ENCODE measurements at regions of chr17 and their contacts with region 1.

Region 1: DNA sequence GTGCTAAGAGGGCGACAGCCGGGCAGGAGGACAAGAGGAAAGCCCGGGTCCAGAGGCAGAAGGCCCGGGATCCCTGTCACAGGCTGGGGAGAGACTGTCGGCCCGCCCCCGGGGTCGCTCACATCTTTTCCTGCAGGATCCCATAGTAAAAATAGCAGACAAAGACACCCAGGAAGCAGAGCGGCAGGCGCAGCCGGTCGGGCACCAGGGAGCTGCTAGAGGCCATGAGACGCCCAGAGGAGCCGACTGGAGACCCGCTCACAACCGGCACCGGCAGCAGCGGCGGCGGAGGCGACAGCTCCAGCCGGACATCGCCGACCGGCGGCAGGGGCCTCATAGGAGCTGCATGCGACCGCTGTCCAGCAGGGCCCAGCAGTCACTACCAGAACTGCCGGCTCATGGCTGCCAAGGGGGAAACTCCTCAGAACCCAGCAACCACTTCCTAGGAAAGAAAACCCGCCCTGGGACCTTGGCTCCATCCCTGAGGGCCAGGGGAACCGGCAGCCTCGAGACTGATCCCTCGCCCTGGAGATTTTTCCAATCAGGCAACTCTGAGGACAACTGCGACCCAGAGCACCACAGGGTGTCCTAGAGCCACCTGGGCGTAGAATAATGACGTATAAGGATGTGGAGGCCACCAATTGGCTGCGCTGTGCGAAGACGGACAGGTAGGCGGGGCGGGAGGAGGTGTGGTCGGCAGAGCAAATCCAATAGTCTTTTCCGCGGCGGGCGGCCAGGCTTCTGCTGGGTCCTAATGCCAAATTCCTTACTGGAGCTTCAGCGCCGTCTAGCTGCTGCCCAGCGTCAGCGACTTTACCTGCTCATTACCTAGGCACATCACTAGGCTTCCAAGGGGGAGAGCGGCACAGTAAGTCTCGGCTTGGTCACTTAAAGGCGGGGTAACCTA is at the start of gene SLC35B1:
- DNase-seq: peak; percentile 96 to 99 (median 98)
- ATAC-seq: peak; percentile 96
- H3K4me3 ChIP-seq: peak within 1 kb of the TSS; percentile 85
- H3K27ac ChIP-seq: peak within 1 kb of the TSS; percentile 98
- H3K4me1 ChIP-seq: peaks cover 6 to 18% of the 10 kb centered on the region in 2 experiments; a peak in 4 of 5 replicates
- H3K27me3 ChIP-seq: no peaks in the 10 kb centered on the region
- CTCF ChIP-seq: peak; percentile 96 to 99 (median 96)
- EP300 ChIP-seq: no peak
- POLR2A ChIP-seq: peak; percentile 84
- RAD21 ChIP-seq: peak; percentile 77 to 81
- polyA plus RNA-seq, gene SLC35B1: 62.0 to 64.4 TPM

Region 2: GRCh38 chr17:49521471-49522356 is 186.1 kb before region 1 on chr17:
- CTCF ChIA-PET with region 1: no interaction called
- POLR2A ChIA-PET with region 1: no interaction called
- in situ Hi-C with region 1: no loop called
- intact Hi-C with region 1: no loop called
- DNase-seq: no peak
- ATAC-seq: no peak
- H3K4me3 ChIP-seq: no peak overlapping the region
- H3K27ac ChIP-seq: no peak overlapping the region
- H3K4me1 ChIP-seq: no peaks in the 10 kb centered on the region
- H3K27me3 ChIP-seq: peaks cover 28 to 64% of the 10 kb centered on the region in 2 experiments; a peak in 4 of 5 replicates
- CTCF ChIP-seq: no peak
- EP300 ChIP-seq: no peak
- POLR2A ChIP-seq: no peak
- RAD21 ChIP-seq: no peak

Region 3: DNA sequence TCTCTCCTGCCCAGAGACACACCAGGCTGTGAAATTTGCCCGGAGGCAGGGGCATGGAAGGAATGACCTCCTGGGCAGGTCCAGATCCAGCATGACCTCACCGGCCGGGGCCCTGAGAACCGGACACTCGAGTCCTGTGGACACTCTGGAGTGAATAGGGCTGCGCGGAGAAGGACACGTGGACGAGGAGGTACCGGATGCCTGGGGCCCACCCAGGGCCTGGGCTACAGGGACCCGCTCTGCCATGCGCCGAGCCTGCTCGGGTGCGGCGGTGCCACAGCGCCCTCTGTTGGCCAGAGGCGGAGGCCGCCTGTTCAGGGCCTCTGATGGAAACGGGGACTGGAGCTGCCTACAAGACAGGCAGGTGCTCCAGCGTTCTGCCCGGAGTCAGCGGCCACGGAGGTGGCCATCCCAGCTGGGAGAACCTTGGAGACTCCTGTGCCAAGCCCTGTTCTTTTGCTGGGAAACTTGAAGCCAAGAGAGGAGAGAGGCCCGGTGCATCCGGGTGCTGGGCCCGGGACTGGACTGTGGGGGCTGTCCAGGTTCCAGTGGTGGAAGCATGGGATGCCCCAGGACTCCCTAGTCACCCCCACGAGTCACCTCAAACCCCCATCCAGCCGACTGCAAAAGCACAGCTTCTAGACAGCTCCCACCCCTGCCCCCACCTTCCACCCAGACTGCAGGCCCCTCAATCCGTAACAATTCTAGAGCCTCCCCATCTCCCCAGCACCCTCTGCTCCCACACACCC is 151.5 kb before region 1 on chr17:
- CTCF ChIA-PET with region 1: interaction called, 11 read pairs
- POLR2A ChIA-PET with region 1: no interaction called
- in situ Hi-C with region 1: no loop called
- intact Hi-C with region 1: no loop called
- DNase-seq: peak; percentile 83 to 91 (median 90)
- ATAC-seq: peak; percentile 99
- H3K4me3 ChIP-seq: no peak overlapping the region
- H3K27ac ChIP-seq: no peak overlapping the region
- H3K4me1 ChIP-seq: peaks cover 0 to 14% of the 10 kb centered on the region in 2 experiments; a peak in 3 of 5 replicates
- H3K27me3 ChIP-seq: peaks cover 0 to 6% of the 10 kb centered on the region in 2 experiments; a peak in 2 of 5 replicates
- CTCF ChIP-seq: peak; percentile 96 to 97 (median 96)
- EP300 ChIP-seq: no peak
- POLR2A ChIP-seq: no peak
- RAD21 ChIP-seq: peak; percentile 83 to 97

Region 4: DNA sequence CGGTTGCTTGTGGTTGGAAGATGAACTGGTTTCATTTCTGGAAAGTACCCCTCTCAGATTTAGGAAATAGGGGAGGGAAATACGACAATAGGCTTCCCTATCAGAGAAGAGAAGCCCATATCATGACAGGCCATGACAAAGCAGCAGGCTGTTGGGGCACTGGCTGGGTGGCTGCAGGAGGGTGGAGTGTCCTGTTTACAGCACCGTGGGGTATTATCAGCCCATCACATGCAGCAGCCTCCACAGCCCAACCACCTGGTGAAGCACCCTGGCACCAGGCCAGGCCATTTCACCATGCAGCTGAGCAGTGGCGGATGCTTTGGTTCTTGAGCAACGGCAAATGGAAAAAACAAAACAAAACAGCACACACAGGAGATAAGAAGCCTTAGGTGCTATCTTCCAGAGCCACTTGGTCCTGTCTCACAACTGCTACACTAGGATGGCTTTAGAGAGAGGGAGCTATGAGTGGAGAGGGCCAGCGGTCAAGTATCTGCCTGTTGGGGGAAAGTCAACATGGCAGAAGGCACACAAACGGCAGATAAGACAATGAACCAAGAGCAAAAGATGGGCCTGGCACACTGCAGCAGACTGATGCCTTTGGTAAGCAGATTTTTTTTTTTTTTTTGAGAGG is 31.9 kb after region 1 on chr17:
- CTCF ChIA-PET with region 1: no interaction called
- POLR2A ChIA-PET with region 1: interaction called, 21 read pairs
- in situ Hi-C with region 1: no loop called
- intact Hi-C with region 1: loop called (anchors 2 kb)
- DNase-seq: peak; percentile 95 to 100 (median 96)
- ATAC-seq: peak; percentile 92
- H3K4me3 ChIP-seq: peak overlapping the region; percentile 16
- H3K27ac ChIP-seq: peak overlapping the region; percentile 92
- H3K4me1 ChIP-seq: peaks cover 28 to 57% of the 10 kb centered on the region in 2 experiments
- H3K27me3 ChIP-seq: no peaks in the 10 kb centered on the region
- CTCF ChIP-seq: no peak; a peak in 1 of 6 replicates
- EP300 ChIP-seq: peak; percentile 99
- POLR2A ChIP-seq: peak; percentile 56; the same call in 1 of the 2 replicates
- RAD21 ChIP-seq: peak; percentile 11 to 55; a peak in 3 of 4 replicates

Region 5: GRCh38 chr17:49779739-49780231 is 71.9 kb after region 1 on chr17:
- CTCF ChIA-PET with region 1: interaction called, 13 read pairs
- POLR2A ChIA-PET with region 1: no interaction called
- in situ Hi-C with region 1: no loop called
- intact Hi-C with region 1: loop called (anchors 1 kb)
- DNase-seq: peak; percentile 35 to 78 (median 44)
- ATAC-seq: peak; percentile 95
- H3K4me3 ChIP-seq: no peak overlapping the region
- H3K27ac ChIP-seq: peak overlapping the region; percentile 35; the same call in 2 of the 3 replicates
- H3K4me1 ChIP-seq: peaks cover 5 to 16% of the 10 kb centered on the region in 2 experiments; a peak in 4 of 5 replicates
- H3K27me3 ChIP-seq: no peaks in the 10 kb centered on the region
- CTCF ChIP-seq: peak; percentile 61 to 81 (median 79)
- EP300 ChIP-seq: no peak
- POLR2A ChIP-seq: no peak
- RAD21 ChIP-seq: peak; percentile 80 to 87

Region 6: GRCh38 chr17:49822829-49823228 is 115.0 kb after region 1 on chr17:
- CTCF ChIA-PET with region 1: no interaction called
- POLR2A ChIA-PET with region 1: no interaction called
- in situ Hi-C with region 1: no loop called
- intact Hi-C with region 1: no loop called
- DNase-seq: peak in 2 of 4 experiments; percentile 44 to 48
- ATAC-seq: no peak
- H3K4me3 ChIP-seq: no peak overlapping the region
- H3K27ac ChIP-seq: no peak overlapping the region
- H3K4me1 ChIP-seq: no peaks in the 10 kb centered on the region
- H3K27me3 ChIP-seq: no peaks in the 10 kb centered on the region
- CTCF ChIP-seq: no peak
- EP300 ChIP-seq: no peak
- POLR2A ChIP-seq: no peak
- RAD21 ChIP-seq: no peak

Region 7: DNA sequence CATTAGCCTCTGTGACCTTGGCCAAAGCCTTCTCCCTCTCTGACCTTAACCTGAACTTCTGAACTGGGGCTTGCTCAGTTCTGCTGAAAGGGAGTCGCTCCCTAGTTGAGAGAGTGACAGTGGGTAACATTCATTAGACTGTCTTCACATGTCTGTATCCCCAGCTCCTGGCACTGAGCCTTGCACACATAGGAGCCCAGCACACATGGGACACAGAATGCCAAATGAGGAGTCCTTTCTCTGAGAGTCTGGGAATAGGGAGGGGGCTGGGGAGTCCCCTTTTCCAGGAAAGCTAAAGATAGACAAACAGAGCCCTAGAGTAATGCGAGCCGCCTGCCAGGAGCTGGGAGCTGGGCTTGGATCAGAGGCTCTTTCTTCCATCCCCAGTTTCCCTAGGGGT is 137.5 kb after region 1 on chr17:
- CTCF ChIA-PET with region 1: no interaction called
- POLR2A ChIA-PET with region 1: interaction called, 7 read pairs
- in situ Hi-C with region 1: loop called (anchors 5 kb)
- intact Hi-C with region 1: loop called (anchors 5 kb)
- DNase-seq: no peak
- ATAC-seq: no peak
- H3K4me3 ChIP-seq: no peak overlapping the region
- H3K27ac ChIP-seq: no peak overlapping the region
- H3K4me1 ChIP-seq: peaks cover 0 to 5% of the 10 kb centered on the region in 2 experiments; a peak in 2 of 5 replicates
- H3K27me3 ChIP-seq: peaks cover 0 to 4% of the 10 kb centered on the region in 2 experiments; a peak in 1 of 5 replicates
- CTCF ChIP-seq: no peak
- EP300 ChIP-seq: no peak
- POLR2A ChIP-seq: no peak
- RAD21 ChIP-seq: no peak

Region 8: GRCh38 chr17:50015146-50015545 is 307.3 kb after region 1 on chr17:
- CTCF ChIA-PET with region 1: no interaction called
- POLR2A ChIA-PET with region 1: no interaction called
- in situ Hi-C with region 1: no loop called
- intact Hi-C with region 1: no loop called
- DNase-seq: no peak
- ATAC-seq: no peak
- H3K4me3 ChIP-seq: no peak overlapping the region
- H3K27ac ChIP-seq: no peak overlapping the region
- H3K4me1 ChIP-seq: no peaks in the 10 kb centered on the region
- H3K27me3 ChIP-seq: no peaks in the 10 kb centered on the region; a peak in 2 of 5 replicates
- CTCF ChIP-seq: no peak
- EP300 ChIP-seq: no peak
- POLR2A ChIP-seq: no peak
- RAD21 ChIP-seq: no peak